Colonic mucosa (tissue), 4 donors: ENCODE measurements at regions of chr14 and their contacts with region 1.

Region 1: DNA sequence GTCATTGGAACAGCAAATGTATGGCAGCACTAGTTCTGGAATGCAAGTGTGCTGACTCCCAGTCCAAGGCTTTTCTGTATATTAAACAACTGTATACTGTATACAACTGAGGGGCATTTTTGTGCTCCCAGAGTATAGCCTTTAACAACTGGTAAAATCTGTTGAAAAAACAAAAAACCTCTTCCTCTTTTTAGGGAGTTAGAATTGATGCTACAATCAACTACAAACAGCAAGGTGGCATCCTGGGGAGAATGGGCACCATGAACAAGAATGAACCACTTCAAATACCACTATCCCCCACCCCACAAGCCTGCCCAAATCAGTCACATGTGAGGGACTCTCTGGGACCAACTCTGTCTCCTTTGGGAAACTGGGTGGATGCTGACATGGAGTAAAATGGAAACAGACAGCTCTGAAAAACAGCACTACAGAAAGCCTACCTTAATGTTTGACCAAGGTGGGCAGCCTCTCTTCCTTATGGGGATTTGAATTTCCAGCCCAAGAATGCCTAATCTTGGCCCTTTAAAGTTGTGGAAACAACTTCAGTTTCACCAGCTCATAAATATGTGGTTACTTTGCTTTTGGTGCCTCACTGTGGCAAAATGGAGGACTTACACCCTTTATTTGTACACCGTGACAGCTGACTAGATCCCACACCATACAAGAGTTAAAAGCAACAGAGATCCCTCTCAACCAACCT is 7.5 kb downstream of the VTI1B start:
- DNase-seq: peak; percentile 30
- H3K4me3 ChIP-seq: no peak overlapping the region
- H3K27ac ChIP-seq: no peak overlapping the region
- H3K4me1 ChIP-seq: peaks cover 3% of the 10 kb centered on the region
- H3K27me3 ChIP-seq: no peaks in the 10 kb centered on the region
- CTCF ChIP-seq: peak; percentile 59

Region 2: GRCh38 chr14:67619446-67620216 is 47.3 kb before region 1 on chr14 and contains the start of gene ARG2:
- intact Hi-C with region 1: loop called (anchors 2 kb)
- DNase-seq: peak; percentile 99
- H3K4me3 ChIP-seq: peak within 1 kb of the TSS; percentile 59
- H3K27ac ChIP-seq: peak within 1 kb of the TSS; percentile 66
- H3K4me1 ChIP-seq: no peaks in the 10 kb centered on the region
- H3K27me3 ChIP-seq: no peaks in the 10 kb centered on the region
- CTCF ChIP-seq: no peak
- total RNA-seq, gene ARG2: 4.7 to 11.5 TPM